Tibial artery (tissue), 4 donors: ENCODE measurements at regions of chr4 and their contacts with region 1.

Region 1: GRCh38 chr4:15457406-15458201 is 12.1 kb upstream of the CC2D2A start:
- DNase-seq: no peak
- H3K4me3 ChIP-seq: no peak overlapping the region
- H3K27ac ChIP-seq: peak overlapping the region; percentile 81 to 82
- H3K4me1 ChIP-seq: peaks cover 0 to 87% (median 50%) of the 10 kb centered on the region in 4 donors
- H3K27me3 ChIP-seq: no peaks in the 10 kb centered on the region
- CTCF ChIP-seq: peak; percentile 70 to 89

Region 2: GRCh38 chr4:15231265-15232091 is 226.1 kb before region 1 on chr4:
- intact Hi-C with region 1: loop called (anchors 2 kb)
- DNase-seq: peak; percentile 90 to 92
- H3K4me3 ChIP-seq: no peak overlapping the region
- H3K27ac ChIP-seq: peak overlapping the region; percentile 64 to 68
- H3K4me1 ChIP-seq: peaks cover 0 to 55% (median 33%) of the 10 kb centered on the region in 4 donors
- H3K27me3 ChIP-seq: no peaks in the 10 kb centered on the region
- CTCF ChIP-seq: peak; percentile 72 to 88

Region 3: GRCh38 chr4:15238720-15239119 is 218.9 kb before region 1 on chr4:
- intact Hi-C with region 1: loop called (anchors 2 kb)
- DNase-seq: no peak
- H3K4me3 ChIP-seq: no peak overlapping the region
- H3K27ac ChIP-seq: peak overlapping the region in 1 of 2 donors; percentile 35
- H3K4me1 ChIP-seq: peaks cover 0 to 83% (median 27%) of the 10 kb centered on the region in 4 donors
- H3K27me3 ChIP-seq: no peaks in the 10 kb centered on the region
- CTCF ChIP-seq: peak; percentile 42 to 47

Region 4: GRCh38 chr4:15396157-15396800 is 61.3 kb before region 1 on chr4:
- intact Hi-C with region 1: loop called (anchors 10 kb)
- DNase-seq: no peak
- H3K4me3 ChIP-seq: no peak overlapping the region
- H3K27ac ChIP-seq: peak overlapping the region; percentile 23 to 39
- H3K4me1 ChIP-seq: peaks cover 0 to 81% (median 48%) of the 10 kb centered on the region in 4 donors
- H3K27me3 ChIP-seq: no peaks in the 10 kb centered on the region
- CTCF ChIP-seq: peak; percentile 48 to 55

Region 5: DNA sequence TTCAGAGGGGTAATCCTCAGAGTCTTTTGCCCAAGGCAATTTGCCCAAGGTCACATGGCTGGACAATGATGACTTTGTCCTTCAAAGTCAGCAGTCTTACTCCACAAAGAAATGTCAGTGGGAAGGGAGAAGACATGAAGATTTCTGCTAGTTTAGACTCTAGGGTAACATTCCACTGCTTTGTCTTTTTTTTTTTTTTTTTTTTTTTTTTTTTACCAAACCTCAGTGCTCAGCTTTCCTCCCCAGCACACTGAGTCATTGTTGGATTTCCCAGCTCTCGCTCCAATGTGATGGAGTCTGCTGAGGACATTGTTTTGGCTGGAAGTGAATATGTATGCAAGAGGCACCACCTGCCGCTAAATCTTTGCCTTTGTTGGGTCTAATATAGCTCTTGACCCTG is 37.0 kb before region 1 on chr4:
- intact Hi-C with region 1: loop called (anchors 5 kb)
- DNase-seq: no peak
- H3K4me3 ChIP-seq: no peak overlapping the region
- H3K27ac ChIP-seq: peak overlapping the region; percentile 71 to 75
- H3K4me1 ChIP-seq: peaks cover 0 to 98% (median 52%) of the 10 kb centered on the region in 4 donors
- H3K27me3 ChIP-seq: no peaks in the 10 kb centered on the region
- CTCF ChIP-seq: no peak

Region 6: DNA sequence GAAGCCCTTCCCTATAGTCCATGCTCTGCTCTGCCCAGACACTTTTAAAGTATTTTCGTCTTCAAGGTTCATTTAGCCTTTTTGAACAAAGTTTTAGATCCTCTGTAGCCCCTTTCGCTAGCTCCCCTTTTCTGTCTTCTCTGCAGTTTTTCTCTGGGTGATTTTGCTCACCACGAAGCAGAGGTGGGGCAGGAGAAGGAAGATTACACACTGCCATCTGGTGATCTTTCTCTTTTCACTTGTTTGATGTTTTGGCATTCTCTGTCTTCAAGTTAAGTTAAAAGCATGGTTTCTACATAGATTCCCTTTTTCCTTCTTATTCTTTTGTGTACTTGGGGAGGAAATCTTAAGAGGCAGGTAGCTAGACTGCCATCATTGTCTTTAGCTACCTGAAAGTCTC is 55.9 kb after region 1 on chr4:
- intact Hi-C with region 1: no loop called
- DNase-seq: no peak
- H3K4me3 ChIP-seq: no peak overlapping the region
- H3K27ac ChIP-seq: no peak overlapping the region
- H3K4me1 ChIP-seq: no peaks in the 10 kb centered on the region
- H3K27me3 ChIP-seq: no peaks in the 10 kb centered on the region
- CTCF ChIP-seq: no peak

Region 7: GRCh38 chr4:15681207-15682015 is 223.8 kb after region 1 on chr4 and contains the start of gene FAM200B:
- intact Hi-C with region 1: no loop called
- DNase-seq: peak; percentile 98 to 99
- H3K4me3 ChIP-seq: peak within 1 kb of the TSS; percentile 79 to 80
- H3K27ac ChIP-seq: peak within 1 kb of the TSS; percentile 88 to 91
- H3K4me1 ChIP-seq: peaks cover 0 to 26% (median 15%) of the 10 kb centered on the region in 4 donors
- H3K27me3 ChIP-seq: no peaks in the 10 kb centered on the region
- CTCF ChIP-seq: peak; percentile 28 to 29